AG04450 (cell line): ENCODE measurements at regions of chr5 and their contacts with region 1.

Region 1: GRCh38 chr5:60687927-60688720 is 11.8 kb downstream of the DEPDC1B start:
- DNase-seq: peak; percentile 34
- H3K4me3 ChIP-seq: no peak overlapping the region
- H3K27ac ChIP-seq: no peak overlapping the region
- H3K27me3 ChIP-seq: no peaks in the 10 kb centered on the region
- CTCF ChIP-seq: peak; percentile 65

Region 2: GRCh38 chr5:60677844-60678664 is 10.1 kb before region 1 on chr5:
- CTCF ChIA-PET with region 1: interaction called, 36 read pairs
- POLR2A ChIA-PET with region 1: no interaction called
- DNase-seq: no peak
- H3K4me3 ChIP-seq: no peak overlapping the region
- H3K27ac ChIP-seq: no peak overlapping the region
- H3K27me3 ChIP-seq: no peaks in the 10 kb centered on the region
- CTCF ChIP-seq: peak; percentile 67